ENCODE measurements at regions of chr18 and their contacts with region 1.

Region 1: GRCh38 chr18:47772374-47773248 is 157.8 kb downstream of the SMAD2 start:
- DNase-seq: peak; percentile 62
- CTCF ChIP-seq: peak; percentile 98

Region 2: GRCh38 chr18:47718646-47719437 is 53.8 kb before region 1 on chr18:
- CTCF ChIA-PET with region 1: no interaction called
- POLR2A ChIA-PET with region 1: no interaction called
- DNase-seq: no peak
- CTCF ChIP-seq: no peak

Region 3: DNA sequence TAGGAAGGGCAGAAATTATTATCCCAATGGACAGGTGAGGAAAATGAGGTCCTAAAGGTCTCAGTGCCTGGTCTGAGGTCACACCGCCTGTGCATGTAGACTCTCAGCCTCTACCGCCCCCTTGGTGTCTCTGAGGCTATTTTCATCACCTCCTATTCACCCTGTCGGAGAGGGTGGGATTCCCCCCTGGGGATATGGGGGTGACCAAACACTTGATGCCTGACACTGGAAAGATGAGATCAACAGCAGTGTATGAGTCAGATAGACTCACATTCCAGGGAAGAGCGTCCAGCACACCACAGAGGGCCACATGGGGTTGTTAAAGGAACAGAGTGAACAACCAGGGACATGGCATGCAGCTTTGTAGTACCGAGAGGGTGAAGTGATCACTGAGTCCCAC is 41.8 kb before region 1 on chr18:
- CTCF ChIA-PET with region 1: no interaction called
- POLR2A ChIA-PET with region 1: no interaction called
- DNase-seq: no peak
- CTCF ChIP-seq: no peak

Region 4: GRCh38 chr18:47997338-47997780 is 224.7 kb after region 1 on chr18:
- CTCF ChIA-PET with region 1: interaction called, 24 read pairs
- POLR2A ChIA-PET with region 1: no interaction called
- DNase-seq: no peak
- CTCF ChIP-seq: peak; percentile 13

Region 5: DNA sequence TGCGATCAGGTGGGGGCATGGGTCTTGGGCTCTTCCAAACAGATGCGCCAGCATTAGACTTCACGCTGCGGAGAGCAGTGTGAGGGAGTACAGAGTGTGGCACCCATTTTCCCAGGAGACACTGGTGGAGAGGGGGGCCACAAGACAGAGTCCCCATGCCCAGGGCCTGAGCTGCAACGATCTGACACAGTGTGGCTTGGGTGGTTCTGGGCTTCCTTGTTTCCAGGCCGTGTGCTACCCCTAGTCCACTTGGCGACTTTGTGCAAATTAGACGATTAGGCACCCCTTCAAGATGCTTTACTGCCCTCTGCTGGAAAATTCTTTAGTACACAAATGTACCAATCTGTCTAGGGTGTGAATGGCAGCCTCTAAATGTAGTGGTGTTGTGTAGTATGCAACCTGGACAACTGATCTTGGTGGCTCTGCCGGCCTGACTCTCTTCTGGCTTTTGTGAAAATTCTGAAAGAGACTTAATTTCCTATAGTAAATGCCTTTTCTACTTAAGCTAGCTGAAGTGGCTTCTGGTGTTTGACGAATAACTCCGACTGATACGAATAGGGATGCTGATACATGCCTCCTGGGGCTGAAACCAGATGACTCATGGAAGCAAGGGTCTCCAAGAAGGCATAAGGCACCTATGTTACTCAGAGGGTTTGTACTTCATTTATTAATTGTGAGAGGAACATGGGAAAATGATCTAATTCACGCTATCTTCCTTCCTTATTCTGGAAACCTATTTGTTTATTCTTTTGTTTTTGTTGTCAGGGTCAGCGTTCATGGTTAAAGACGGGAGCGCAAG is 250.1 kb after region 1 on chr18:
- CTCF ChIA-PET with region 1: interaction called, 20 read pairs
- POLR2A ChIA-PET with region 1: no interaction called
- DNase-seq: peak; percentile 61
- CTCF ChIP-seq: peak; percentile 48